Common myeloid progenitor, CD34-positive (primary cell): ENCODE measurements at regions of chr2 and their contacts with region 1.

Region 1: DNA sequence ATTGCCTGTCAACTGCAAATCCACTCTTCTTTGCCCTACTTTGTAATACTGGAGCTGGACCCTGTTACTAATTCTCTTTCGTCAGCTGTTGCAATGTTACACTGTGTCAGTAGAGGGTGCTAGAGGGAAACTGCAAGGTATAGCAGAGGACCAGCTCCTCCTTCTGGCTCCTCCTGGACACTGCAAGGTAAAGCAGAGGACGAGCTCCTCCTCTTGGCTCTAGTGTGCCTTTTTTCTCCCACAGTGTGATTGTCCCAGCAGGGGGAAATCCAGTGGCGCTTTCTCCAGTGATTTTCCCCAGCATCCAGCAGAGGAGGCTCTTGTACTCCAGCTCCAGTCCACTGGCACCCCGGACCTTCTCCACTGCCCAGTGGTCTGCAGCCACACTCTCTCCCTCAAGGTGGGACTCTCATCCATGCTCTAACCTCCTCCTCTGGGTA is 95.6 kb downstream of the CAPN13 start:
- DNase-seq: peak; percentile 89 to 95 (median 90)
- H3K4me3 ChIP-seq: no peak overlapping the region
- H3K27ac ChIP-seq: no peak overlapping the region
- H3K4me1 ChIP-seq: peaks cover 0 to 12% (median 5%) of the 10 kb centered on the region in 4 experiments
- H3K27me3 ChIP-seq: no peaks in the 10 kb centered on the region

Region 2: DNA sequence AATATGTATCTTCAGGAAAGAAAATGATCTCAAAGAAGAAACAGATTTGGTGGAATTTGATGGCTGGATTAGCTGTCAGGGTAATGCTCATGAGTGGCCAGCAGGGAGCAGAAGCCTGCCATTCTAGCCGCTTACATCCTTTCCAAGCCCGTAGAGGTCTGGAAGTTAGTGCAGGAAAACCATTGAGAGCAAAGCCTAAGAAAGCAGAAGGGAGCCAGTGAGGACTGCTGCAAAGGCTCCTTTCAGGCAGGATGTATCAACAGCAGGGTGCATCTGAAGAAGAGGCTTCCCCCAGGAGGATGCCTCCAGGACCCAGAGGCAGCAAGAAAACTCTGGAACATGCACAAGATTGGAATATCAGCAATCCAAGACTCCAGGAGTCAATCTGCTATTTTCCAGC is 503.2 kb before region 1 on chr2:
- CTCF ChIA-PET with region 1: interaction called, 196 read pairs
- POLR2A ChIA-PET with region 1: no interaction called
- DNase-seq: peak; percentile 45 to 66 (median 57)
- H3K4me3 ChIP-seq: no peak overlapping the region
- H3K27ac ChIP-seq: no peak overlapping the region
- H3K4me1 ChIP-seq: peaks cover 0 to 3% (median 1%) of the 10 kb centered on the region in 4 experiments
- H3K27me3 ChIP-seq: peaks cover 0 to 2% (median 0%) of the 10 kb centered on the region in 5 experiments

Region 3: DNA sequence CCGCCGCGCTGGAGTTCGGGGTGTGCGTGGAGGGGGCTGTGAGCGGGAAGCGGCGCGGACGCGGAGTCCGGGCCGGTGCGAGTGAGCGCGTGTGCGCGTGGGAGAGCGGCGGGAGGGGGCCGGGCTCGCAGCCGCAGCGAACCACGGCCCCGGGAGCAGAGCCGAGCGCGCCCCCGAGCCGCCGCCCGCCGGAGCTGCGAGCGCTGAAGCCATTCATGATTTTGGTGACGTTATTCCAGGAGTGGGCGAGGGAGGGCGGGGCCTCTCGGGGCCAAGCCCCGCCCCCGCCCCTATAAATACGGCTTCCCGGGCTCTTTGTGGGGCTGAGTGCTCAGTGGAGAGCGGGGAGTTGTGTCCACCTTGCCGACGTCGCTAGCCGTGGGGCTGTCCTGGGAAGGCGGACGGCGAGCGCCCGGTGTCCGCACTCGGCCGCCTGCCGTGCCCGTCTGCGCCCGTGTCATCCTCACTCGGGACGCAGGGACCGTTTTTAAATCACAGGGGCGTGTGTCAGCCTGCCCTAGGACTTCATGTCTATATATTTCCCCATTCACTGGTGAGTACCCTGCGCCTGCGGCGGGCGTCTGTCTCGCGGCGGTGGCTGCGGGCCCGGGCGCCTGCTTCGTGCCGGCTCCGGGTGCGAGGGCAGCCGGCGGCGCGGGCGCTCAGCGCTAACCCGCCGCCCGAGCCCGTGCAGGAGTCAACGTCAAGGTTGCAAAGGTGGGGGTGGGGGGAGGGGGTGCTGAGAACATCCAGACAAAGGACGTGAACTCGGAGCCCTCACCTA is 480.3 kb before region 1 on chr2 and contains the start of gene LBH:
- CTCF ChIA-PET with region 1: interaction called, 28 read pairs
- POLR2A ChIA-PET with region 1: interaction called, 3 read pairs
- DNase-seq: peak; percentile 84 to 90 (median 88)
- H3K4me3 ChIP-seq: peak within 1 kb of the TSS; percentile 68 to 87 (median 80)
- H3K27ac ChIP-seq: peak within 1 kb of the TSS in 1 of 2 experiments; percentile 74
- H3K4me1 ChIP-seq: peaks cover 6 to 31% (median 30%) of the 10 kb centered on the region in 4 experiments
- H3K27me3 ChIP-seq: peaks cover 0 to 3% (median 0%) of the 10 kb centered on the region in 5 experiments

Region 4: DNA sequence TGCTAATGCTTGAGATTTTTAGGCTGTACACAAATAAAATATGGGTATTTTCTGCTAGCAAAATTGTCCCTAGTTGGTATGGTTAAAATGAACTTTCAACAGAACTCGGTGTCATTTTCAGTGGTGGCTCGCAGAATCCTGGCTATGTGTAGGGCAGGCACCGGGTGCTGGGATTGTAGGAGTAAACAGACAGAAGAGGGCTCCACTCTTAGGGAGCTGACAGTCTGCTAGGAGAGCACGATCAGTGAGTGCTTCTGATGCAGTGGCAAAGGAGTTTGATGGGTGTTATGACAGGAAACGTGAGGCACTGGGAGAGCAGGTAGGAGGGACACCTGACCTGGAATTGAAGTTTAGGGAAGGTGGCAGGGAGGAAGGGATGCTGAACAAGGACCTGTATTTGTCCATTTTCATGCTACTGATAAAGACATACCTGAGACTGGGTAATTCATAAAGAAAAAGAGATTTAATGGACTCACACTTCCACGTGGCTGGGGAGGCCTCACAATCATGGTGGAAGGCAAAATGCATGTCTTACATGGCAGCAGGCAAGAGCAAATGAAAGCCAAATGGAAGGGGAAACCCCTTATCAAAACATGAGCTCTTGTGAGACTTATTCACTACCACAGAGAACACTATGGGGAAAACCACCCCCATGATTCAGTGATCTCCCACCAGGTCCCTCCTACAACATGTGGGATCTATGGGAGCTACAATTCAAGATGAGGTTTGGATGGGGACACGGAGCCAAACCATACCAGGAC is 370.0 kb before region 1 on chr2:
- CTCF ChIA-PET with region 1: no interaction called
- POLR2A ChIA-PET with region 1: no interaction called
- DNase-seq: no peak
- H3K4me3 ChIP-seq: no peak overlapping the region
- H3K27ac ChIP-seq: no peak overlapping the region
- H3K4me1 ChIP-seq: peaks cover 3 to 9% (median 9%) of the 10 kb centered on the region in 4 experiments
- H3K27me3 ChIP-seq: no peaks in the 10 kb centered on the region

Region 5: DNA sequence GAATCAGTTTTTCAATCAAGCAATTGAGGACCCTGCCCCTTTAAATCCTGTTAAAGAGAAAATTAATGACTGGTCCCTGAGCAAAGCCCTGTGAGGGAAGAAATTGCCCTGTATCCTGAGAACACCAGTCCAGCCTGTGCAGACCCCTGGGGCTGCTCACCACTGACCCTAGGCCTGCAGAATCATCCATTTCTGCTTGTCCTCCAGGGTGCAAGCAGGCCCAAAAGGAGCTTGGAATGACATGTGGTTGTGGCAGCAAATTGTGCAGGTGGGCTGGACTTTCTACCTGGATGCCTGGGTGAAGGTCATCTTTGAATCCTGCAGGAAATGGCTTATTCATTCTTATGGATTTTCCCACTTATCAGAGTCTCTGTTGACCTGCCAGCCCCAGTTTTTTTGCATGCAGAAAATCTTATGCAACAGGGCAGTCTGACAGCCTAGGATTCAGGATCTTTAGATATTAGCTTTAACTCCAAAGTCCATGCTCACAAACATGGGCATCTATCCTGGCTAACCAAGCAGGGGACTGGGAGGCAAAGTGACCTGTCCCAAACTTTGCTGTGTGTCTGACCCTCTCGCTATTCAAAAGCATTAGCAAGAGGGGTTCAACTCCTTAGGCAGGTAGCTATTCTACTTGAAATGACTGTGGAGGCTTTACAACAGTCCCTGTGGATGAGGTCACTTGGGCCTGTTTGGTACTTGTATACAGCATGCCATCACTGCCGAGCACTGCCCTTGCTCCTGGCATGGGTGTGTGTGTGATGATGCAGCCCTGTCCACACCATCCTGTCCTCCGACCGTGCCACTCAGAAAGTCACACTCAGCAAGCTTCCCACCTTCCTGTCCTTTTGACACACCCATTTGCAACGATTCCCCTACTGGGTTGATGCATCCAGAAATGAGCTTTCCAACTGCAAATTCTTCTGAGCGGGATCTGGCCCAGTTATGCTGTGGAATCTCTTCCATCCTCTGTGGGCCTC is 10.3 kb after region 1 on chr2:
- CTCF ChIA-PET with region 1: interaction called, 15 read pairs
- POLR2A ChIA-PET with region 1: no interaction called
- DNase-seq: no peak
- H3K4me3 ChIP-seq: no peak overlapping the region
- H3K27ac ChIP-seq: no peak overlapping the region
- H3K4me1 ChIP-seq: no peaks in the 10 kb centered on the region
- H3K27me3 ChIP-seq: peaks cover 0 to 5% (median 0%) of the 10 kb centered on the region in 5 experiments

Region 6: DNA sequence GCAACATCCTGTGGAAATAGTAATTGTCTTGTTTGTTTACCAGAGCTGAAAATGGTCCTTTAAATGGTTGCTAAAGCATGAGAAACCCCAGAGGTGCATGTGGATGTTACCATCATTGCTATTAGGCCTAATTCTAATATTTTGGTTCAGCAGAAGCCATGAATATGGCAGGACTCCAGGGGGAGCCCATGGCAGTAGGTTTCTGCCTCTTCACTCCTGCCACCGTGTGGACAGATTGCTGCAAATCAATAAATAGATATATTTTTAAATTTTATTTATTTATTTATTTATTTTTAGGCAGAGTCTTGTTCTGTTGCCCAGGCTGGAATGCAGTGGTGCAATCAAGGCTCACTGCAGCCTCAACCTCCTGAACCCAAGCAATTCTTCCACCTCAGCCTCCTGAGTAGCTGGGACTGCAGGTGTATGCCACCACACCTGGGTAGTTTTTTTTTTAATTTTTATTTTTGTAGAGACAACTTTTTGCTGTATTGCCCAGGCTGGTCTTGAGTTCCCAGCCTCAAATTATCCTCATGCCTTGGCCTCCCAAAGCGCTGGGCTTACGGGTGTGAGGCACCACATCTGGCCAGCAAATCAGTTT is 150.5 kb after region 1 on chr2:
- CTCF ChIA-PET with region 1: interaction called, 27 read pairs
- POLR2A ChIA-PET with region 1: no interaction called
- DNase-seq: peak; percentile 82 to 91 (median 87)
- H3K4me3 ChIP-seq: no peak overlapping the region
- H3K27ac ChIP-seq: no peak overlapping the region
- H3K4me1 ChIP-seq: peaks cover 6 to 20% (median 14%) of the 10 kb centered on the region in 4 experiments
- H3K27me3 ChIP-seq: peaks cover 0 to 6% (median 0%) of the 10 kb centered on the region in 5 experiments

Region 7: GRCh38 chr2:31333527-31334183 is 622.0 kb after region 1 on chr2:
- CTCF ChIA-PET with region 1: interaction called, 64 read pairs
- POLR2A ChIA-PET with region 1: no interaction called
- DNase-seq: peak; percentile 69 to 88 (median 83)
- H3K4me3 ChIP-seq: no peak overlapping the region
- H3K27ac ChIP-seq: no peak overlapping the region
- H3K4me1 ChIP-seq: no peaks in the 10 kb centered on the region
- H3K27me3 ChIP-seq: no peaks in the 10 kb centered on the region